Mammary epithelial cell (primary cell): ENCODE measurements at regions of chr12 and their contacts with region 1.

Region 1: GRCh38 chr12:2154050-2154449 is 101.3 kb downstream of the CACNA1C start:
- DNase-seq: no peak
- H3K4me3 ChIP-seq: no peak overlapping the region
- H3K27ac ChIP-seq: no peak overlapping the region
- H3K4me1 ChIP-seq: no peaks in the 10 kb centered on the region
- H3K27me3 ChIP-seq: no peaks in the 10 kb centered on the region
- CTCF ChIP-seq: no peak

Region 2: DNA sequence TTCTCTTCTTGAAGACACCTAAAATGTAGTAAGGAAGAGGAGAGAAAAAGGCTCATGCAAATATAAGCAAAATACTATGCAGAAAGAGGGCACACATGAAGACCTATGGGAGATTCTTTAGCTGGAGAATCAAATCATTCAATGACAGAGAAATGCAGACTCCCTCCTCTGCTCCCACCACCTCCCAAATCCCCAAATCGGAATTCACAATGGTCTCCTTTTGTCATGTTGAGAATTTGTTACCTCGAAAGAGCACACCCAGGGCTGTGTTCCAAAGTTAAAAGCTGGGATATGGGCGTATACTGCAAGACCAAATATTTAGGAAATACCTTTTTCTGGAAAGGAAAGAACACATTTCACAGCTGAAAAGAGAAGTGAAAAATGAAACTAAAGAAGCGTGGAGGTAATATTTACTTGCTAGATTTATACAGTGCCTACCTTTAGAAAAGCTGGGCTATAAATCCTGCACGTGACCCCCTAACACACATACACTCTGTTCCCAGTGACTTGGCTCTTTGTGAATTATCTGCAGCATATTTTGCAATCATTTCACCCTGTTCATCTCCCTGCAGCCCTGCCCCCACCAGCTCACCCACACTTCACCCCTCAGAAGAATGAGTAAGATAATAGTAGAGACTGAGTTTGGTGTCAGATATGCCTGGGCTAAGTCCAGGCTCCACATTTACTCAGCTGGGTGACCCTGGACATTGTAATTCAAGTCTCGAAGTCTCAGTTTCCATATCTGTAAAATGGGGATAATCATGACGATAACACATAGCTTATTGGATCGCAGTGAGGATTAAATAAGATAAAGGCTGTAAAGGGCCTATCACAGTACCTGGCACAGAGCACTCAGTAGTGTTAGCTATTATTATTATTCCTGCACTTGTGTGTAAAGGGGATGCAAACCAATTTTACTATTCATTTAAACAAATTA is 104.2 kb before region 1 on chr12:
- CTCF ChIA-PET with region 1: no interaction called
- dilution Hi-C with region 1: loop called (anchors 10 kb)
- in situ Hi-C with region 1: no loop called
- intact Hi-C with region 1: no loop called
- DNase-seq: no peak
- H3K4me3 ChIP-seq: no peak overlapping the region
- H3K27ac ChIP-seq: no peak overlapping the region
- H3K4me1 ChIP-seq: no peaks in the 10 kb centered on the region
- H3K27me3 ChIP-seq: peaks cover 28% of the 10 kb centered on the region
- CTCF ChIP-seq: no peak

Region 3: DNA sequence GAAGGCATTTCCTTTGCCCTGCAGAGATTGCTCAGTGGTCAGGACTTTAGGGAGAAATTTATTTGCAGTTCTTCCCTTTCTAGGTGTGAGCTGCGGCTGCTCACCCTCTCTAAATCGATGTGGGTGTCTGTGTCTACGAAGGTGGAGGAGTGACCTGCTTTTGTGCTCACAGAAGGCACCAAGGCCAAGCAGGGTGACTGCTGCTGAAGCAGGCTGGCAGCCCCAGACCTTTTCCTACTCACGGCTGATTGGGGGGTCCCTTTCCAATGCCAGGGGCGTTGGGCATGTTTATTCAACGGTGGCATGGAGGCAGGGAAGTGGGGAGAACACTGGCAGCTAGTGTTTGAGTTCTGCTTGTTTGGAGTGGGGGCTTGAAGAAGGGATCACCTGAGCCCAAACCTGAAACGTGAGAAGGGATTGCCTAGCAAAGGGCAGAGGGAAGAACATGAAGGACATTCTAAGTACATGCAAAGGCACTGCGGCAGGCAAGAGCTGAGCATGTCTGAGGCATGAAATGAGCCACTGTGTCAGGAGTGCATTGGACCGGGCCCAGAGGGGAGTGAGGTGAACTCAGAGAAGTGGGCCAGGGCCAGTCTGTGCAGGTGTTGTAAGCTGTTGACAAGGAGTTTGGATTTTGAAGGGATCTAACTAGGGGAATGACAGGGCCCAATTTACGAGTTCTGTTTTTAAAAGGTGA is 44.9 kb before region 1 on chr12:
- CTCF ChIA-PET with region 1: no interaction called
- dilution Hi-C with region 1: no loop called
- in situ Hi-C with region 1: loop called in 1 of 2 experiments (anchors 5 kb)
- intact Hi-C with region 1: no loop called
- DNase-seq: no peak
- H3K4me3 ChIP-seq: no peak overlapping the region
- H3K27ac ChIP-seq: no peak overlapping the region
- H3K4me1 ChIP-seq: no peaks in the 10 kb centered on the region
- H3K27me3 ChIP-seq: peaks cover 2% of the 10 kb centered on the region
- CTCF ChIP-seq: no peak

Region 4: DNA sequence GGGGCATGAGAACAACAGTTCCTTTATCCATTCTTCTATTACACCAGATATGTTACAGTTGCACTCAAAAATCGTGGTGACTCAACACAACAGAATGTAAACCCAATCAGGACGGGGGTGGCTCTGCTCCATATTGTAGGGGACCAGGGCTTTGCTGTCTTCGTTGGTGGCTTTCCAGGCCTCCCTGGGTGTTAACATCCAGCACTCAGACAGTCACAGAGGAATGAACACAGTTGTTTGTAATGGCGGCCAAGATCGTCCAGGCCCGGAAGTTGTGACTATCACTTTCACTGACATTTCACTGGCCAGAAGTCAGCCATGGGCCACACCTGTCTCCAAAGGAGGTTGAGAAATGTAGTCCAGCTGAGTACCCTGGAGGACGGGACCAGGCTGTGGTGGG is 102.9 kb after region 1 on chr12:
- CTCF ChIA-PET with region 1: no interaction called
- dilution Hi-C with region 1: no loop called
- in situ Hi-C with region 1: no loop called
- intact Hi-C with region 1: loop called (anchors 5 kb)
- DNase-seq: no peak
- H3K4me3 ChIP-seq: no peak overlapping the region
- H3K27ac ChIP-seq: no peak overlapping the region
- H3K4me1 ChIP-seq: no peaks in the 10 kb centered on the region
- H3K27me3 ChIP-seq: no peaks in the 10 kb centered on the region
- CTCF ChIP-seq: no peak

Region 5: GRCh38 chr12:2341871-2342270 is 187.8 kb after region 1 on chr12:
- CTCF ChIA-PET with region 1: no interaction called
- dilution Hi-C with region 1: no loop called
- in situ Hi-C with region 1: no loop called
- intact Hi-C with region 1: no loop called
- DNase-seq: peak; percentile 76
- H3K4me3 ChIP-seq: no peak overlapping the region
- H3K27ac ChIP-seq: no peak overlapping the region
- H3K4me1 ChIP-seq: peaks cover 42% of the 10 kb centered on the region
- H3K27me3 ChIP-seq: no peaks in the 10 kb centered on the region
- CTCF ChIP-seq: no peak